Head of caudate nucleus (tissue), 42 donors: ENCODE measurements at regions of chr7 and their contacts with region 1.

Region 1: GRCh38 chr7:137169282-137169698 is 174.2 kb downstream of the PTN start:
- DNase-seq: peak; percentile 40 to 90 (median 72)

Region 2: DNA sequence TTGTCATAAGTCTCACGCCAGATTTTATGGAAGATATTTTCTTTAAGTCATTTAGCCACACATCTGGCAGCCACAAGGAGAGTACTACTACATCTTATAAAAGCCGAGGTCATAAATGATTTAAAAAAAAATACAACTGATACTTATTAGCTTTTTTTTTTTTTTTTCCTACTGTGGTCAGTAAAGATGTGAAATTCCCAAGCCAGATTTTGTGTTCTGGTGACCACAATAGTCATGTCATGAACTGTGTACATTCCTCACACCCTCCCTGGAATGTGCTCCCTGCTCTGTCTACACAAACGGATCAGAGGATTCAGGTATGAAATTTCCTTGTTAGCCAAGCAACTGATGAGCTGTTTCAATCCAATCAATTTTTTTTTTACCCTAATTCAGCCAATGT is 246.2 kb before region 1 on chr7:
- intact Hi-C with region 1: no loop called
- DNase-seq: no peak

Region 3: DNA sequence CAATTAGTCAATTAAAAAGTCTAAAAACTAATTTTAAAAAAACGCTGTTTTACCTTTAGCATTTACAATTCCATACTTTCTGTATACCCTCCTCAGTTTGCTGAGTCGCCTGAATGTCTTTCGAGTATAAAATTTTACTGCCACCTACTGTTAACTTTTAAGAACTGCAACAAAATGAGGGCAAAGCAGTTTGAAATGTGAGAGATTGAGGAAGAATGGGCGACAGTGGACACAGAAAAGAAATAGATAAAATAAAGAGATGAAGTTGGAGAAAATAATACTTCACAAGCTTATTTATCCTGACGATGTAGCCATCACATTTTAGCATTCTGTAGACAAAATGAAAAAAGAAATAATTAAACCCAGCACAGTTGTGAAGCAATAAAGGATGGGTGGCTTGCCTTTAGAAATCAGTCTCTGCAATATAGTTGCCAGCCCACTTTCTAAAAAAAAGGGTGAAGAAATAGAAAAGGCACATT is 285.0 kb after region 1 on chr7:
- intact Hi-C with region 1: loop called (anchors 5 kb)
- DNase-seq: peak in 2 of 42 donors; percentile 24 to 54

Region 4: DNA sequence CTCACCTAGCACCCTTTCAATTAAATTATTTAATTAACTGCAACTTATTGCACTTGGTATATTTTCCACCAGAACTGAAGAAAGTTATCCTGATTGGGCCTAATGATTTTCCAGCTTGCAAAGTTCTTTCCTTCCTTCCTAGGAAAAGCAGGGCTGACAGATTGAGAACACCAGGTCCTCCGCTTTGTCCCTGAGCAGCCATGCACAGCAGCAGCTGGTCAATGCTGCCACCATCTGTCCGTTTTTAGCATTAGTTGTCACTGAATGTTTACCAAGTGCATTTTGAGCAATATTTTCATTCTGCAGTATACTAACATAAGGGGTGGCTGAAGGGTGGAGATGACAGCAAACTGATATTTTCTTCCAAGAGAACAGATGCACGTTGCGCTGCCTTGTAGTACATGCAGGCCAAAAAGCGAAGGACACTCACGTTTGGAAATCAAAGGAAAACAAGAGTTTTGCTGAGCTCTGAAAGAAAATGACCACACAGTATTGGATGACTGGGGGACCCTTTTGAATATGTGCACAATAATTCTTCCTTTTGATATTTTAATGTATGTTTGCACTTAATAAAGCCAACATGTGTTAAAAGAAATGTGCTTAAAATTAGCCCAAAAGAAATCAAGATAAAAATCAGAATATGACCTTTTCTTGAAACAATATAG is 423.1 kb after region 1 on chr7:
- intact Hi-C with region 1: loop called (anchors 5 kb)
- DNase-seq: peak; percentile 26 to 87 (median 66)